ENCODE measurements at regions of chr15 and their contacts with region 1.

Region 1: DNA sequence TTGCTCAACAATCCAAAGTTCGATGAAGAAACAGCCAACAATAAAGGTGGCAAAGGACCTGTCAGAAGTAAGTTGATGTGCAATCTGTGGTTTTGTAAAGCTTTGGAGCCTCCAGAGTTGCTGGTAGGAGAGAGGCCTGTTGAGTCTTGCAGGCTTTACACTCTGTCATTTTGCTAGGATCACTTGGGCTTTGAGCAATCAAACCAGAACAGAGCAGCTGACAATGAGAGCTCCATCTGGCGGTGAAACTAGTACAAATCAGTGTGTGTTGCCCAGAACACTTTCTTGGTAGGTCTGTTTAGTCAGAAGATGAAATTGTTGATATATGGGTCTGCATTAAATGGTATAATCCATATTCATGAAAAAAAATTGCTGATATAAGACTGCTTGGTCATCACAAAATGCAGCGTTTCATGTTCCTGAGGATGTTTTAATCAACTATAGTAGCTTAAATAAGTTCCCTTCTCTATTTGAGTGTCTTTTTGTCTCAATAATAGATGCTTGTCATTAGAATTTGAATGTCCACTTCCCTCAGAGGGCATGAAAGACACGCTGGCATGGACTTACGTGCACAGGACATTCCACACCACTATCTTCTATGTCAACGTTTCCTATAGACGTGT is 25.7 kb downstream of the TMOD2 start:
- DNase-seq: peak; percentile 94
- H3K4me3 Mint-ChIP-seq: no peak overlapping the region
- H3K27ac Mint-ChIP-seq: no peak overlapping the region
- H3K4me1 Mint-ChIP-seq: peaks cover 27% of the 10 kb centered on the region
- H3K27me3 Mint-ChIP-seq: no peaks in the 10 kb centered on the region
- CTCF ChIP-seq: peak; percentile 47

Region 2: DNA sequence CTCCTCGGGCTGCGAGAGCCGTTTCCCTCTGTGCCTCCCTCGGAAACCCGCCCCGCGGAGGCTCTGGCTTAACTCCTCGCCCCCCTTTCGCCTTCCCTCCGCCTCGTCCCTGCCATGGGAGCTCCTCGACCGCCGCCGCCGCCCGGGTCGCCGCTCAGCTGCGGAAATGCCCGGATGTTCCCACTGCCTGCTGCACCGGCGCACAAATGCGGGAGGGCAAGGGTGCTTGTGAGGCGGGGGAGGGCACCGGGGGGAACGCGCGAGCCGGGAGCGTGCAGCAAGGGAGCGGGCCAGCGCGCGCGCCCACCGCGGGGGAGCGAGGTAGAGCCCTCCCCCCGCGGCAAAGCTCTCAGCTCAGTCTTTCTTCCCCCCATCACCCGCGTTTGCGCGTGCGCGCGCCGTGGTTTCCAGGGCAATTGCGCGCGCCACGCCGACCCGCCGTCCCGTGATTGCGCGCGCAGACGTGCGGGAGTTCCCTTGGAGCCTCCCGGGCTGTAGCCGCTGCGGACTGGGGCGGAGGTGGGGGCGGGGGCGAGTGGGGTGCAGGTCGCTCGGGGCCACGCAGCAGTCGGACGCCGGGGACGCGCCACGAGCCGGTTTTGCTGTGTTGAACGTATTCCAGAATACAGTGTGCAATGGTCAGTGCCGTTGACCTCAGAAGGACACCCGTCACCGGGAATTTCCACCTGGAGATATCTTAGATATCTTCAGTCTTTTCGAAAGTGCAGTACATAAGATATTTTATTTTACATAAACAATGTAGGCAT is 154.3 kb before region 1 on chr15 and contains the start of gene DMXL2:
- CTCF ChIA-PET with region 1: interaction called, 3 read pairs
- POLR2A ChIA-PET with region 1: interaction called, 10 read pairs
- intact Hi-C with region 1: no loop called
- DNase-seq: peak; percentile 79
- H3K4me3 Mint-ChIP-seq: peak within 1 kb of the TSS; percentile 99
- H3K27ac Mint-ChIP-seq: peak within 1 kb of the TSS; percentile 90
- H3K4me1 Mint-ChIP-seq: peaks cover 27% of the 10 kb centered on the region
- H3K27me3 Mint-ChIP-seq: no peaks in the 10 kb centered on the region
- CTCF ChIP-seq: no peak
- total RNA-seq, gene DMXL2: 13.6 and 21.6 TPM in 2 replicates

Region 3: DNA sequence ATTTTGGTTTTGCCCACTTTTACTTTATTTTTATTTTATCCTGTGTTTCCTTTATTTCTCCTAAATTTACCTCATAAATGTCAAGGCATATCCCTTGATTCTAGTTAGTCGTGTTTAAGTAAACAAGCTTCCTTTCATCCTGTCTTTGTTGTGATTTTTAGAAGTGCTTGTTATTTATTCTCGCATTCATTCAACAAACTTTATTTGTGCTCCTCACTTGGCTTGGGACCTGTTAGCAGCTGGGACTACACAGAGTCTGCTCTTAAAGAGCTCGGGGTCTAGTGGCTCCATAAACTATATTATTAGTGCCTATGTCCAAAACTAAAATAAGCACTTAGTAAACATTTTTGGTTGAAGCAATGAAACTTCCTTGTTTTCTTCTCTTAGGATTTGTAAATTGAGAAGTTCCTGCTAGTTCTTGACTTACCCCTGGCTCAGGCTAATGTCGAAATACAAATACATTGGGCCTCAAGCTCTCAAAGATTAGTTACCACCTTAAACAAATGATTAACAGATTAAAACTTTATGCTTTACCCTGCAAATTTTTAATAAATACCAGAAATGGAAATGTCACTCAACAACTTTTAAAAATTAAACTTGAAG is 135.4 kb before region 1 on chr15:
- CTCF ChIA-PET with region 1: interaction called, 184 read pairs
- POLR2A ChIA-PET with region 1: interaction called, 4 read pairs
- intact Hi-C with region 1: no loop called
- DNase-seq: no peak
- H3K4me3 Mint-ChIP-seq: no peak overlapping the region
- H3K27ac Mint-ChIP-seq: no peak overlapping the region
- H3K4me1 Mint-ChIP-seq: no peaks in the 10 kb centered on the region
- H3K27me3 Mint-ChIP-seq: no peaks in the 10 kb centered on the region
- CTCF ChIP-seq: no peak

Region 4: DNA sequence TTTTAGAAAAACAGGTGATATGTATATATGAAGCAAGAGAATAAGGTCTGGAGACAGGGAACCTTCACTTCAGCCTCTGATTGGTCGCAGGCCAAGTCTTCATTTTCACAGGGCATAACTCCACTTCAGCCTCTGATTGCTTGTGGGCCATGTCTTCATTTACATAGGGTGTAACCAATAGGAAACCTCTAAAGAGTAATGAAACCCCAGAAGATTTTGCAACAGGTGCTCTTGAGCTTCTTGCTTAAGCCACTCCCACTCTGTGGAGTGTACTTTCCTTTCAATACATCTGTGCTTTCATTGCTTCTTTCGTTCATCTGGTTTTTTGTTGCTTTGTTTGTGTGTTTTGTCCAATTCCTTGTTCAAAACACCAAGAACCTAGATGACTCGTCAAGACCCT is 118.4 kb before region 1 on chr15:
- CTCF ChIA-PET with region 1: interaction called, 30 read pairs
- POLR2A ChIA-PET with region 1: no interaction called
- intact Hi-C with region 1: no loop called
- DNase-seq: peak; percentile 19
- H3K4me3 Mint-ChIP-seq: no peak overlapping the region
- H3K27ac Mint-ChIP-seq: no peak overlapping the region
- H3K4me1 Mint-ChIP-seq: no peaks in the 10 kb centered on the region
- H3K27me3 Mint-ChIP-seq: no peaks in the 10 kb centered on the region
- CTCF ChIP-seq: no peak

Region 5: DNA sequence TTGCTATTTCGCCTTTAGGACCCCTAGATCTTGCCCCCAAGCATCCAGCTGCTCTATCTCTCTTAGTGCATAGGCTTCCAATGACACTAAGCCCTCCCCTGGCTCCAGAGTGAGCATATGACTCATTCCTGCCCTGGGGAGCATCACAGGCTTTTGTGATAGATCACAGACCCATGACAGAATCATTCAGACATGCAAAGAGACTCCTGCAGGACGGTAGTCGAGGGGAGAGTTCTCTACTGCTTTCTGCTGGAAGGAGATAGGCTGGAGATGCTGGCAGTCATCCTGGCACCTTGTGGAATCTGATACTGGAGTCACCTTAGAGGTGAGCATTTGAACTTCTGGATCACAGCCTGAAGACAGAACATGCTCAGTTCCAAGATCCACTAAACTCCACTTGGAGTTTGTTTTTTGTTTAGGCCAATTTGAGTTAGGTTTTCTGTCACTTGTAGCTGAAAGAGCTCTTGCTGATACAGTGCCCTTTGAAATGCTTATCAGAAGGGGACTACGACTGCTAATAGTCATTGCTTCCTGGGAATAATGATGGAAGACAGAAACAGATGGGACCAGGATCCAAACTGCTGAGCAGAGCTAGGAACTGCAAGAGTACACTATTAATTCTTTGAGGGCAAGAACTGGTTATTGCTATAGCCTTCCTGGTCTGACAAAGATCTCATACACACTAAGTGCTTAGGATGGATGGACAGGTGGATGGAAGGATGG is 50.6 kb before region 1 on chr15:
- CTCF ChIA-PET with region 1: interaction called, 32 read pairs
- POLR2A ChIA-PET with region 1: interaction called, 4 read pairs
- intact Hi-C with region 1: loop called (anchors 2 kb)
- DNase-seq: peak; percentile 92
- H3K4me3 Mint-ChIP-seq: no peak overlapping the region
- H3K27ac Mint-ChIP-seq: no peak overlapping the region
- H3K4me1 Mint-ChIP-seq: peaks cover 31% of the 10 kb centered on the region
- H3K27me3 Mint-ChIP-seq: no peaks in the 10 kb centered on the region
- CTCF ChIP-seq: no peak

Region 6: DNA sequence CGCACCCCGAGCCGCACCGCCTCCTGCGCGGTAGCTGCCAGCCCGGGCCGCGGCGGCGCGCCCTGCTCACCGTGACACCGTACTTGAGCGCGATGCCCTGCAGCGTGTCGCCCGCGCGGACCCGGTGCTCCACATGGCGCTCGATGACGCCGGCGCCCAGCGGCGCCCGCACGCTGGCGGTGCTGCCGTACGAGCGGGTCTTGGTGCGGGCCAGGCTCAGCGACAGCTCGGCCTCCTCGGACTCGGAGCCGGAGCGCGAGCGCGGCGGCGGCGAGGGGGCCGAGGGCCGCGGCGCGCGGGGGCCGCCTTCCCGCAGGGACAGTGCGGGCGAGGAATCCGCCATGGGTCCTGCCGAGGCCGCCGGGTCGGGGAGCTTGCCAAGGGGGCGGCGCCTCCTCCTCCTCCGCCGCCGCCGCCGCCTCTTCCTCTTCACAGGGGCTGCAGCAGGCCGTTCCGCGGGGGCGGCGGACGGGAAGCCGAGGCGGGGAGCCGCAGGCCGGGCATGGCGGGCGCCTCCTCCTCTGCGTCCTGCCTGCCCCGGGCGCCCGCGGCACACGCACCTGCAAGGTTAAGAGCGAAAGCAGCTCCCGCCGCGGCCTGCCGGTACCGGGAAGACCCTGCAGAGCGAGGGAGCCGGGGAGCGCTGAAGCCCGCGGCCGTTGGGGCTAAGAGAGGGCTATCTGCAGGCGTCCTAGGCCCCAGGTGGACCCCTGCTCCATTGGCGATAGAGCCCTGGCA is 39.6 kb before region 1 on chr15 and contains the start of gene LYSMD2:
- CTCF ChIA-PET with region 1: interaction called, 40 read pairs
- POLR2A ChIA-PET with region 1: interaction called, 39 read pairs
- intact Hi-C with region 1: no loop called
- DNase-seq: peak; percentile 63
- H3K4me3 Mint-ChIP-seq: peak within 1 kb of the TSS; percentile 77
- H3K27ac Mint-ChIP-seq: peak within 1 kb of the TSS; percentile 39
- H3K4me1 Mint-ChIP-seq: peaks cover 20% of the 10 kb centered on the region
- H3K27me3 Mint-ChIP-seq: no peaks in the 10 kb centered on the region
- CTCF ChIP-seq: no peak
- total RNA-seq, gene LYSMD2: 13.4 and 14.3 TPM in 2 replicates

Region 7: GRCh38 chr15:51939216-51939615 is 162.2 kb after region 1 on chr15:
- CTCF ChIA-PET with region 1: no interaction called
- POLR2A ChIA-PET with region 1: no interaction called
- intact Hi-C with region 1: no loop called
- DNase-seq: no peak
- H3K4me3 Mint-ChIP-seq: no peak overlapping the region
- H3K27ac Mint-ChIP-seq: no peak overlapping the region
- H3K4me1 Mint-ChIP-seq: no peaks in the 10 kb centered on the region
- H3K27me3 Mint-ChIP-seq: no peaks in the 10 kb centered on the region
- CTCF ChIP-seq: no peak